ENCODE measurements at regions of chr6 and their contacts with region 1.

Region 1: DNA sequence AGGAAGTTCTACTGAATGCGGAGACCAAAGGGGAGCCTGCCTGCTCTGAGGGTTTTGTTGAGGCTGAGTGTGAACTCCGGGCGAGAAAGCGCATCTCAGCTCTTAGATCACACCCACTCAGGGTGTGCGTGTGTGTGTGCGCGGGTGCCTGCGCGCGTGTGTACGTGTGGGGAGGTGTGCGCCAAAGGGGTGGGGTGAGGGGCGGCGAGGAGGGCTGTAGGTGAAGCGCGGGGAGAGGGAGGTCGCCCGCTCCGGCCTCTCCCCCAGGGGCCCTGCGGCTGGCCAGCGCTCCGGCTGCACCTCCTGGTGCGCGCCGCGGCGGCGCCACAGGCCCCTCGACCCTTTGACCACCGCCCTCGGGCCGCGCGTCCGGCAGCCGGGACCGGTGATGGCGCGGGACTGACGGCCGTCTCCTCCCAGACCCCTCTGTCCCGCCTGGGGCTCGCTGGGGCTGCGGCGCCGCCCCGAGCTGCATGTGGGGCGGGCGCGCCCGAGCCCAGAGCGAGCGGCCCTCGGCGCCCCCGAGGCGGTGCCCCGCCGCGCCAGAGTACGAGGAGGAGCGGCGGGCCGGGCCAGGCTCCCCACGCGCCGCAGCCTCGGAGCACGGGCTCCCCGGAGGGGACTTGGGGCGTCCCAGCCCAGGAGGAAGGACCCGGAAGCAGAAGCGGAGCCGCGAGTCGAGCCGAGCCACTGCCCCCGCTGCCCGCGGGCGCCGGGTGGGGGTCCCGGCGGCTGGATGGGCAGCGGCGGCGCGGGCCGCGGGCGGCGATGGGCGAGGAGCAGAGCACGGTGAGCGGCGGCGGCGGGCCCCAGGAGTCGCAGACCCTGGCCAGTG is at the start of gene RNF217:
- DNase-seq: peak; percentile 82 to 86 (median 84)
- ATAC-seq: peak; percentile 74
- H3K4me3 ChIP-seq: peak within 1 kb of the TSS; percentile 75
- H3K27ac ChIP-seq: peak within 1 kb of the TSS; percentile 84
- H3K4me1 ChIP-seq: peaks cover 16 to 23% of the 10 kb centered on the region in 2 experiments
- H3K27me3 ChIP-seq: no peaks in the 10 kb centered on the region
- CTCF ChIP-seq: peak in 2 of 3 experiments; percentile 19 to 41; a peak in 3 of 6 replicates
- EP300 ChIP-seq: no peak
- POLR2A ChIP-seq: peak; percentile 68
- RAD21 ChIP-seq: no peak
- polyA plus RNA-seq, gene RNF217: 2.9 to 4.0 TPM

Region 2: GRCh38 chr6:124881898-124882579 is 80.0 kb before region 1 on chr6:
- CTCF ChIA-PET with region 1: no interaction called
- POLR2A ChIA-PET with region 1: no interaction called
- in situ Hi-C with region 1: no loop called
- intact Hi-C with region 1: no loop called
- DNase-seq: no peak
- ATAC-seq: peak; percentile 53
- H3K4me3 ChIP-seq: no peak overlapping the region
- H3K27ac ChIP-seq: no peak overlapping the region
- H3K4me1 ChIP-seq: no peaks in the 10 kb centered on the region; a peak in 1 of 5 replicates
- H3K27me3 ChIP-seq: no peaks in the 10 kb centered on the region
- CTCF ChIP-seq: no peak
- EP300 ChIP-seq: no peak
- POLR2A ChIP-seq: no peak
- RAD21 ChIP-seq: no peak

Region 3: GRCh38 chr6:125013938-125014660 is 52.1 kb after region 1 on chr6:
- CTCF ChIA-PET with region 1: no interaction called
- POLR2A ChIA-PET with region 1: interaction called, 5 read pairs
- in situ Hi-C with region 1: no loop called
- intact Hi-C with region 1: loop called (anchors 2 kb)
- DNase-seq: peak in 1 of 4 experiments; percentile 32
- ATAC-seq: peak; percentile 84
- H3K4me3 ChIP-seq: no peak overlapping the region
- H3K27ac ChIP-seq: peak overlapping the region; percentile 41
- H3K4me1 ChIP-seq: peaks cover 0 to 16% of the 10 kb centered on the region in 2 experiments; a peak in 3 of 5 replicates
- H3K27me3 ChIP-seq: no peaks in the 10 kb centered on the region
- CTCF ChIP-seq: no peak
- EP300 ChIP-seq: peak; percentile 77
- POLR2A ChIP-seq: no peak; the same call in 1 of the 2 replicates
- RAD21 ChIP-seq: peak in 1 of 2 experiments; percentile 22; a peak in 1 of 4 replicates

Region 4: GRCh38 chr6:125082908-125083683 is 121.1 kb after region 1 on chr6:
- CTCF ChIA-PET with region 1: no interaction called
- POLR2A ChIA-PET with region 1: no interaction called
- in situ Hi-C with region 1: no loop called
- intact Hi-C with region 1: loop called (anchors 1 kb)
- DNase-seq: peak; percentile 57 to 95 (median 70)
- ATAC-seq: peak; percentile 91
- H3K4me3 ChIP-seq: no peak overlapping the region
- H3K27ac ChIP-seq: peak overlapping the region; percentile 86
- H3K4me1 ChIP-seq: peaks cover 3 to 59% of the 10 kb centered on the region in 2 experiments
- H3K27me3 ChIP-seq: no peaks in the 10 kb centered on the region
- CTCF ChIP-seq: no peak
- EP300 ChIP-seq: peak; percentile 97
- POLR2A ChIP-seq: no peak
- RAD21 ChIP-seq: peak in 1 of 2 experiments; percentile 31; a peak in 2 of 4 replicates

Region 5: GRCh38 chr6:125114248-125114858 is 152.4 kb after region 1 on chr6:
- CTCF ChIA-PET with region 1: no interaction called
- POLR2A ChIA-PET with region 1: no interaction called
- in situ Hi-C with region 1: no loop called
- intact Hi-C with region 1: loop called (anchors 1 kb)
- DNase-seq: peak in 3 of 4 experiments; percentile 45 to 78 (median 45)
- ATAC-seq: peak; percentile 71; the same call in 2 of the 3 replicates
- H3K4me3 ChIP-seq: no peak overlapping the region
- H3K27ac ChIP-seq: no peak overlapping the region
- H3K4me1 ChIP-seq: no peaks in the 10 kb centered on the region
- H3K27me3 ChIP-seq: no peaks in the 10 kb centered on the region
- CTCF ChIP-seq: peak; percentile 38 to 81 (median 51); a peak in 4 of 6 replicates
- EP300 ChIP-seq: no peak
- POLR2A ChIP-seq: no peak
- RAD21 ChIP-seq: peak; percentile 79 to 95

Region 6: DNA sequence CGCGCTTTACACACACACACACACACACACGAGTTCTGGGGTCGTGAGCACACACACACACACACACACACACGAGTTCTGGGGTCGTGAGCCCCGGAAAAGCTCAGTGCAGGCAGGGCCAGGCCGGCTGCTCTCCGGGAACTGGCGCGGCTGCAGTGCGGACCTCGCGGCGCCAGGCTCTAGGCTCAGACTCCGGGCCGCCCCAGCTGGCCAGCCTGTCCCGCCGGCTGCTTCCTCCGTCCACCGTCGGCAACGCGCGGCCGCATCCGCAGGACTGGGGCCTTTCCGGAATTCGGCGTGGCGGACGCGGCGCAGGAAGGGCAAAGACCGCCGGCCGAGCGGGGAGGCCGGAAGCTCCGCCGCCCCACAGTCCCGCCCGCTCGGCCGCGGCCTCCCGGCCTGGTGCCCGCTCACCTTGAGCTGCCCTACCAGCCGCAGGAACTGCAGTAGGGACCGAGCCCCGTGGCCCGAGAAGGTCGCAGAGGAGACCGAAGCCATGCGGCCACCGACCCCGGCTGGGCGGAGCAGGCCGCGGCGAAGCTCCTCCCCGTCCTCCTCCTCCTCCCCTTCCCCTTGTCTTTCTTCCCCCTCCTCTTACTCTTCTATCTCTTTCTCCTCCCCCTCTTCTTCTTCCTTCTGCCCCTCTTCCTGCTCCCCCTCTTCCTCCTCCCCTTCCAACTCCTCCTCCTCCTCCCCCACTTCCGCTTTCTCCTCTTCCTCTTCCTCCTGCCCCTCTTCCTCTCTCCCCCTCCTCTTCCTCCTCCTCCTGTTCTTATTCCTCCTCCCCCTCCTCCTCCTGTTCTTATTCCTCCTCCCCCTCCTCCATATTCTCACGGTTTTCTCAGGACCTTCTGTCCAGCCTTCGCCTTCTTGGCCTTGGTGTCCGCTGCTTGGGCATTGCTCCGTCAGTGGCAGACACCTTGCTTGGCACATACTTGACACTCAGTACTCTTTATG is 339.7 kb after region 1 on chr6 and contains the start of gene HDDC2:
- CTCF ChIA-PET with region 1: no interaction called
- POLR2A ChIA-PET with region 1: no interaction called
- in situ Hi-C with region 1: no loop called
- intact Hi-C with region 1: loop called (anchors 5 kb)
- DNase-seq: peak; percentile 83 to 89 (median 89)
- ATAC-seq: peak; percentile 84
- H3K4me3 ChIP-seq: peak within 1 kb of the TSS; percentile 80
- H3K27ac ChIP-seq: peak within 1 kb of the TSS; percentile 96
- H3K4me1 ChIP-seq: peaks cover 11 to 51% of the 10 kb centered on the region in 2 experiments
- H3K27me3 ChIP-seq: no peaks in the 10 kb centered on the region
- CTCF ChIP-seq: no peak
- EP300 ChIP-seq: no peak
- POLR2A ChIP-seq: peak; percentile 93
- RAD21 ChIP-seq: no peak
- polyA plus RNA-seq, gene HDDC2: 587 to 632 TPM